B cell (primary cell): ENCODE measurements at regions of chr2 and their contacts with region 1.

Region 1: DNA sequence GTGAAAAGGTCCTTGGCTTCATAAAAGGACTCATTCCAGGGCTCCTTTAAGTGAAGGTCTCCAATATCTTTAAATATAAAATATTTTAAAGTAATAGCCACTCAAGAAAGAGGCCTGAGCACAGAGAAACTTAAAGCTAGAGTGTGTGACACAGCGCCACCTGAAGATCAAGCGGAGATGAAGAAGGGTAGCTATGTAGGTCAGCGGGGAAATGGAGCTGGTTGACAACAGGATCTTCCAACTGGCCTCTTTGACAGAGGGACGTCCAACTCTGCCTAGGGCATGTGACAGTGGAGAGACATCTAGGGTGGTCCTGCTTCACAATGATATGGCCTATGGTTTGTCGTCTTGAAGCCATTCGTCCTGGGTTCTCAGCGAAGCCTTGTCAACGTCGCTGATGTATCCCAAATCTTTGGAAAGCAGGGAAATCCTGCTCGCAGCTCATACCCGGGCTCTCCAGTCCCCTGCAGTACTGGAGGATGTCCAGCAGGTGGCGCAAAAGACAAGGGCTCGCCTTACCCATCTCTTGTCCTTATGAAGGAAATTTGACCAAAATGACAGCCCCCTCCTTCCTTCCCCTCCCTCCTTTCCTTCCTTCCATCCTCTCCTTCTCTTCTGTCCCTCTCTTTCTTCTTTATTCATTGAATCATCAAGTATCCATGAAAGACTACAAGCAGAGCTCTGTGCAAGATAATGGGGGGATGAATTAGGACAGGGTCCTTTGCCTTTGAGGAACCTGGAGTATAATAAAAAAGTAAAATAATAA is 59.6 kb downstream of the LONRF2 start:
- DNase-seq: peak; percentile 73
- ATAC-seq: peak; percentile 77
- H3K4me3 ChIP-seq: no peak overlapping the region
- H3K4me3 Mint-ChIP-seq: no peak overlapping the region
- H3K27ac ChIP-seq: no peak overlapping the region
- H3K27ac Mint-ChIP-seq: no peak overlapping the region
- H3K4me1 ChIP-seq: no peaks in the 10 kb centered on the region
- H3K4me1 Mint-ChIP-seq: peaks cover 17% of the 10 kb centered on the region
- H3K27me3 ChIP-seq: no peaks in the 10 kb centered on the region
- H3K27me3 Mint-ChIP-seq: no peaks in the 10 kb centered on the region
- CTCF ChIP-seq: peak; percentile 99

Region 2: DNA sequence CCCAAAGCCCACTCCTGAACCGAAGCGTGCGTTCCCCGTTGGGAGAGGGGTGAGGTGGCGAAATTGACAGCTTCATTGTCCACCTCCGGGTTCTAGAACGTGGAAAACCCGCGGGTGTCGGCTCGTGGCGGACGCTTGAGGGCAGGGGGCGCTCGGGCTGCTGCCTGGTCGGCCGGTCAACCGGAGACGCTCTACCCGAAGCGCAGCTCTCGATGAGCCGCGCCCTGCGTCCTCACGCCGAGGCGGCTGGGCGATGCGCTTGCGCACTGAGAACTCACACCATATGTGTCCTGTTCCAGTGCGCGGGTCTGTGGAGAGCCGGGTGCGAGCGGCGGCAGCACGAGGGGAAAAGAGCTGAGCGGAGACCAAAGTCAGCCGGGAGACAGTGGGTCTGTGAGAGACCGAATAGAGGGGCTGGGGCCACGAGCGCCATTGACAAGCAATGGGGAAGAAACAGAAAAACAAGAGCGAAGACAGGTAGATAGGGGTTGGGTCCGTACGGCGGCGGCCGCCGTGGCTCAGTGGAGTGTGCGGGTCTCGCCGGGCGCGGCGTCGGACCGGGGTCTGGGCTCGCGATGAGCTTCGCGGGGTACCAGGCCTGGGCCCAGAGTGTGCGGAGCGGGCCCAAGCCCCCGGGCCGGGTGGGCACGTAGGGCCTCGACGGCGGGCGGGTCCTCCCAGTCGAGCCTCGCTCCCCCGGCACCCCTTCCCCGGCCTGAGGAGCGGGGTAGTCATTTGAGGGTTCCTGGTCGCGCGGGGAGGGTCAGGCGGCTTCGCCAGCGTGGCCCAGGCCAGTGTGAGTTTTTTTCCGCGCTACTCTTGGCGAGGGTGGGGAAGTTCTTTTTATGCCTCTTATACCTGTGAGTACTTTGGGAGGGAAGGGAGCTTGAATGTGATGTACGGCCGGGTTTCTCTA is 925.4 kb before region 1 on chr2 and contains the start of gene EIF5B:
- CTCF ChIA-PET with region 1: interaction called, 3 read pairs
- POLR2A ChIA-PET with region 1: no interaction called
- intact Hi-C with region 1: loop called (anchors 2 kb)
- DNase-seq: peak; percentile 96
- ATAC-seq: peak; percentile 63
- H3K4me3 ChIP-seq: peak within 1 kb of the TSS; percentile 78 to 95 (median 87)
- H3K4me3 Mint-ChIP-seq: no peak within 1 kb of the TSS
- H3K27ac ChIP-seq: peak within 1 kb of the TSS; percentile 90 to 93
- H3K27ac Mint-ChIP-seq: no peak within 1 kb of the TSS
- H3K4me1 ChIP-seq: peaks cover 14 to 31% of the 10 kb centered on the region in 2 donors
- H3K4me1 Mint-ChIP-seq: peaks cover 29% of the 10 kb centered on the region
- H3K27me3 ChIP-seq: no peaks in the 10 kb centered on the region
- H3K27me3 Mint-ChIP-seq: no peaks in the 10 kb centered on the region
- CTCF ChIP-seq: peak; percentile 70
- total RNA-seq, gene EIF5B: 32.8 and 33.0 TPM in 2 replicates

Region 3: GRCh38 chr2:100113990-100114433 is 148.7 kb before region 1 on chr2:
- CTCF ChIA-PET with region 1: interaction called, 11 read pairs
- POLR2A ChIA-PET with region 1: interaction called, 5 read pairs
- intact Hi-C with region 1: no loop called
- DNase-seq: peak; percentile 74
- ATAC-seq: peak; percentile 50
- H3K4me3 ChIP-seq: peak overlapping the region in 3 of 5 experiments; percentile 16 to 39 (median 25)
- H3K4me3 Mint-ChIP-seq: peak overlapping the region; percentile 78
- H3K27ac ChIP-seq: peak overlapping the region; percentile 72 to 84
- H3K27ac Mint-ChIP-seq: peak overlapping the region; percentile 93
- H3K4me1 ChIP-seq: peaks cover 62 to 67% of the 10 kb centered on the region in 2 donors
- H3K4me1 Mint-ChIP-seq: peaks cover 81% of the 10 kb centered on the region
- H3K27me3 ChIP-seq: no peaks in the 10 kb centered on the region
- H3K27me3 Mint-ChIP-seq: no peaks in the 10 kb centered on the region
- CTCF ChIP-seq: no peak

Region 4: DNA sequence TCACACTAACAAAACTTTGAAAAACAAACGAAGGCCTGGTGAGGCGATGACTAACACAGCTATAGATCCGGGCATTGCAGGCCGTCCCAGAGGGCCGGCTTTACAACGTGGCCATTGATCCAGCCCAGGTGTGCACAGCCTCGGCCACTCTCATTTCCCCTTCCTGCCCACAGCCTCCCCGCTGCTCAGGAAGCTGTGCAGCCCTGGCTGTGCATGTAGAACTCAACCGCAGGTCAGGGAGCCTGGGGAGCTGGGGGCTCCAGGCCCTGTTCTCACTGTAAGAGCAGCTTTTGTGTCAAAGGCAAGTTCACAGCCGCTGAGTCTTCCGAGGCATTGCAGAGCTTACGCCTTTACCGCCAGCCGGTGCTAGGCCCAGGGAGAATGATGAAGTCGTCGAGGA is 27.6 kb before region 1 on chr2:
- CTCF ChIA-PET with region 1: interaction called, 34 read pairs
- POLR2A ChIA-PET with region 1: interaction called, 4 read pairs
- intact Hi-C with region 1: no loop called
- DNase-seq: peak; percentile 84
- ATAC-seq: peak; percentile 91
- H3K4me3 ChIP-seq: peak overlapping the region in 2 of 5 experiments; percentile 2 to 21
- H3K4me3 Mint-ChIP-seq: peak overlapping the region; percentile 81
- H3K27ac ChIP-seq: peak overlapping the region; percentile 56 to 79
- H3K27ac Mint-ChIP-seq: peak overlapping the region; percentile 94
- H3K4me1 ChIP-seq: peaks cover 51 to 54% of the 10 kb centered on the region in 2 donors
- H3K4me1 Mint-ChIP-seq: peaks cover 61% of the 10 kb centered on the region
- H3K27me3 ChIP-seq: no peaks in the 10 kb centered on the region
- H3K27me3 Mint-ChIP-seq: no peaks in the 10 kb centered on the region
- CTCF ChIP-seq: no peak

Region 5: GRCh38 chr2:100272841-100273329 is 10.1 kb after region 1 on chr2:
- CTCF ChIA-PET with region 1: interaction called, 35 read pairs
- POLR2A ChIA-PET with region 1: no interaction called
- intact Hi-C with region 1: no loop called
- DNase-seq: no peak
- ATAC-seq: no peak
- H3K4me3 ChIP-seq: no peak overlapping the region
- H3K4me3 Mint-ChIP-seq: no peak overlapping the region
- H3K27ac ChIP-seq: no peak overlapping the region
- H3K27ac Mint-ChIP-seq: no peak overlapping the region
- H3K4me1 ChIP-seq: peaks cover 0 to 5% of the 10 kb centered on the region in 2 donors
- H3K4me1 Mint-ChIP-seq: peaks cover 10% of the 10 kb centered on the region
- H3K27me3 ChIP-seq: no peaks in the 10 kb centered on the region
- H3K27me3 Mint-ChIP-seq: peaks cover 3% of the 10 kb centered on the region
- CTCF ChIP-seq: no peak

Region 6: DNA sequence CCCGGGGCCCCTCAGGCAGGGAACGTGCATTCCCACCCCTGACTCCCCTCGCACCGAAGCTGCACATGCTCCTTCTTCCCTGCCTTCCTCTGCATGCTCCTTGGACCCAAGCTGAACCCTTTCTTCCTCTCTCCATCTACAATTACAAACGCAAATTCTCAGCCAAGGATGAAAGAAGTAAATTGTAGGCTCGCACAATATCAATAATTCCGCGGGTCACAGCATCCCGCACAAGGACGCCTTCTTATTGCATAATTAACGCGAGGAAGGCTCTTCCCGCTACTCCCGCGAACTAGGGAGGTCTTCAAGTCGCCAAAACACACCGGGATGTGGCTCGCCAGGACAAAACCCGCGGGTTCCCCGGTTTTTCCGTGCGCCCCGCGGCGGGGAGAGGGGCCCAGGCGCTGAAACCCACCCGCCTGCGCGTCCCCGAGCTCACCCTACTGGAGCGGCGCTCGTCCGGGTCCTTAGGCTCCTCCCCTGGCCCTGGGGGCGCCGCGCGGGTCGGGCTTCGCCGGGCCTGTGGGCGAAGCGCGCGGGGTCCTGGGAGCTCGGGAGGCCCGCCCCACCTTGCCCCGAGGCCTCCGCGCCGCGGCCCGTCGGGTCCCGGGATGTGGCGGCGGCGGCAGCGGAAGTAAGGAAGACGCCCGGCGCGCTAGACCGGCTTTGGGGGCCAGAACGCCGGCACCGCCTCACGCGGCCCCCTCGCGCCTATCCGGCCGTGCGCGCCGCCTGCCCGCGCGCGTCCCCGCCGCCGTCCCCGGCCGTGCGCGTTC is 154.4 kb after region 1 on chr2 and contains the start of gene CHST10:
- CTCF ChIA-PET with region 1: interaction called, 3 read pairs
- POLR2A ChIA-PET with region 1: no interaction called
- intact Hi-C with region 1: loop called (anchors 2 kb)
- DNase-seq: peak; percentile 77
- ATAC-seq: peak; percentile 93
- H3K4me3 ChIP-seq: peak within 1 kb of the TSS; percentile 65 to 95 (median 79)
- H3K4me3 Mint-ChIP-seq: peak within 1 kb of the TSS; percentile 93
- H3K27ac ChIP-seq: peak within 1 kb of the TSS in 1 of 2 donors; percentile 60
- H3K27ac Mint-ChIP-seq: peak within 1 kb of the TSS; percentile 54
- H3K4me1 ChIP-seq: peaks cover 11 to 14% of the 10 kb centered on the region in 2 donors
- H3K4me1 Mint-ChIP-seq: peaks cover 22% of the 10 kb centered on the region
- H3K27me3 ChIP-seq: no peaks in the 10 kb centered on the region
- H3K27me3 Mint-ChIP-seq: no peaks in the 10 kb centered on the region
- CTCF ChIP-seq: no peak
- total RNA-seq, gene CHST10: 9.9 and 10.7 TPM in 2 replicates

Region 7: DNA sequence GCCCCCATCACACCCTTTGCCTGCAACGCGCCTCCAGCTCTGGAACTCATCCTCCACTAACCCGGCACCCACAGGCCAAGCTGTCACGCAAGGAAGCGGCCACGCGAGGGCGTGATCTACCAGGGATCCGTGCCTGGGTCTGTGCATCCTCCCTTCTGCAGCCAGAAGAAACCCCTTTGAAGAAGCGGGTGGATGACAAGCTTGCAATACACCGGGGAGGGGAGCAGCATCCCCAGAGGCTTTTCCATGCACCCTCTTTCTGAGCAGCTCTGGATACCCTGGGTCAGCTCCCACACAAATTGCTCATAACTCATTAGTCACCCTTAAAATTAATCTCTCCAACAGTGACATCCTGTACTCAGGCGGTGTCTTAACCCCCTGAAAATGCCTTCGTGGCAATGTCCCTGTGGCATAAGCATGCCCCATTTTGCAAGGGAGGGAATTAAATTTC is 347.7 kb after region 1 on chr2:
- CTCF ChIA-PET with region 1: interaction called, 15 read pairs
- POLR2A ChIA-PET with region 1: no interaction called
- intact Hi-C with region 1: no loop called
- DNase-seq: peak; percentile 44
- ATAC-seq: no peak
- H3K4me3 ChIP-seq: no peak overlapping the region
- H3K4me3 Mint-ChIP-seq: no peak overlapping the region
- H3K27ac ChIP-seq: no peak overlapping the region
- H3K27ac Mint-ChIP-seq: no peak overlapping the region
- H3K4me1 ChIP-seq: no peaks in the 10 kb centered on the region
- H3K4me1 Mint-ChIP-seq: peaks cover 1% of the 10 kb centered on the region
- H3K27me3 ChIP-seq: peaks cover 0 to 5% (median 0%) of the 10 kb centered on the region in 4 experiments
- H3K27me3 Mint-ChIP-seq: peaks cover 29% of the 10 kb centered on the region
- CTCF ChIP-seq: peak; percentile 53